ENCODE measurements at regions of chr17 and their contacts with region 1.

Region 1: GRCh38 chr17:9628509-9628908 is 16.8 kb upstream of the USP43 start:
- DNase-seq: no peak
- ATAC-seq: no peak
- H3K4me3 ChIP-seq: no peak overlapping the region
- H3K4me3 Mint-ChIP-seq: no peak overlapping the region
- H3K27ac ChIP-seq: no peak overlapping the region
- H3K27ac Mint-ChIP-seq: no peak overlapping the region
- H3K4me1 ChIP-seq: no peaks in the 10 kb centered on the region
- H3K4me1 Mint-ChIP-seq: no peaks in the 10 kb centered on the region
- H3K27me3 ChIP-seq: no peaks in the 10 kb centered on the region
- H3K27me3 Mint-ChIP-seq: peaks cover 23% of the 10 kb centered on the region
- CTCF ChIP-seq: no peak

Region 2: GRCh38 chr17:9676742-9677387 is 48.4 kb after region 1 on chr17:
- CTCF ChIA-PET with region 1: no interaction called
- POLR2A ChIA-PET with region 1: interaction called, 16 read pairs
- intact Hi-C with region 1: no loop called
- DNase-seq: no peak
- ATAC-seq: no peak
- H3K4me3 ChIP-seq: no peak overlapping the region
- H3K4me3 Mint-ChIP-seq: no peak overlapping the region
- H3K27ac ChIP-seq: no peak overlapping the region
- H3K27ac Mint-ChIP-seq: no peak overlapping the region
- H3K4me1 ChIP-seq: no peaks in the 10 kb centered on the region
- H3K4me1 Mint-ChIP-seq: no peaks in the 10 kb centered on the region
- H3K27me3 ChIP-seq: no peaks in the 10 kb centered on the region
- H3K27me3 Mint-ChIP-seq: no peaks in the 10 kb centered on the region
- CTCF ChIP-seq: no peak

Measured in B cell (primary cell).